ENCODE measurements at regions of chr9 and their contacts with region 1.

Region 1: DNA sequence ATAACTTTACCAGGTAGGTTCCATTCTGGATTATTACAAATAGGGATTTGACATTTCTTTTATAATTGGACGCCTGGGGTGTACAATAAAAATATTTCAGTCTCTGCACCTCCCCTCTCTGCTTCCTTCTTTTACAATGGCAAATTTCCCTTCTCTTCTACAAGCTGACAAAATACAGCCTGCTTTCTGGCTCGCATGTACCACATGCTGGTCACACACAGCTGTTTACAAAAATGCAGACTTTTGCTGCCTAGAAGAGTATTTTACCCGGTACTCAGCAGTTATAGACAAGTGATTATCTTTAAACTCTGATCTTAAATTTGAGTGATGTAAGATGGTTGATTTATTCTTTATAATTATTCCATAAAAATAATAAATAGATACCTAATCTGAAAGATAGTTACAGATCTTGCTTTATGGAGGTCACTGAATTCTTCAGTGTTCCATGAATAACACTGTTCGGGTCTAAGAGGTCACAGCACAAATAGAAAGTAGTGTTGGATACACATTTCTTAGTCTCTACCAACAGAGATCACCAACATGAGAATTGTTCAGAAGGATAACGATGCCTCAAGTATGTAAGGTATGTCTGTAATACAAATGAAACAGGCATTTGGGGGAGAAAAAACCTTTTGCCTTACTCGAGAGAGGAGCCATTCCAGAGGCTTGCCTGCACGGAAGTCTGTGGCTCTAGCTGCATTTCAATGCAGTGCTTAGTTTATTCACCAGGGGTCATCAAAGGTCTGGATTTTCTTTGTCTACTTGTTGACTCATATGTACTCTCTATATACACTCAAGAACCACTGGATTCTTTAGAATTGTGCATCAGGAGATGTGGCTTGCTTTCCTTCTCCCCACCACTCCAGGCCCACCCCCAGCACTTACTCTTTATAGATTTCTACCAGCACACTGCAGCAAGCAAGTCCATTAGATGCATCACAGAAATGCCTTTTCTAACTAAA is 206.6 kb upstream of the RFX3 start:
- DNase-seq: peak; percentile 47
- ATAC-seq: peak; percentile 92
- H3K4me3 Mint-ChIP-seq: no peak overlapping the region
- H3K27ac Mint-ChIP-seq: no peak overlapping the region
- H3K4me1 Mint-ChIP-seq: peaks cover 31% of the 10 kb centered on the region
- H3K27me3 Mint-ChIP-seq: peaks cover 2% of the 10 kb centered on the region

Region 2: DNA sequence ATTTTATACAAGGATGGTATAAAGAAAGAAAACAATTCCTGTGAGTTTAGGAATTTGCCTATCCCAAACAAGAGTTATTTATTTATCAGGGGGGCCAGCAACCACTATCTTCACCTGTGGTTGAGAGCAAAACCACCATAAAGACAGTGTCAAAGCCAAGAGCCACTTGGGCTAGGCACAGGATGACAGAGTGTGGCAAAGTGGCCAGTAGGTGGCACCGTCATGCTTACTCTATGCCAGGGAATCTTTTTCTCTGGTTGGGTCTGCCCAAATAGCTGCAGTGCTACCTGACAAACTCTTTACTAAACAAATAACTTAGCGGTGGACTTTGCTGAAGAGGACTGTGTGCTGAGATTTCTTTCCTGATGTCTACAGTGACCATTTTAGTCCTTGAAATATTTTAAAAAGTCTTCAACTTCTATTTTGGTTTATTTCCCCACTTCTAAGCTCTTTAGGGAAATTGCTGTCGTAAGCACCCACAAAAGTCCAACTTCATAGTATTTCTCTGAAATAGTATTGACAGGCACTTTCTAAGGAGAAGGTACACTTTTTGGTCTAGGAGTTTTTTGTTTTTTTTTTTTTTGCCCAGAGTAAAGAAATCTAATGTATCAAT is 491.6 kb before region 1 on chr9:
- CTCF ChIA-PET with region 1: interaction called, 5 read pairs
- POLR2A ChIA-PET with region 1: no interaction called
- intact Hi-C with region 1: loop called in 1 of 2 experiments (anchors 1 kb)
- DNase-seq: peak; percentile 84
- ATAC-seq: peak; percentile 93
- H3K4me3 Mint-ChIP-seq: no peak overlapping the region
- H3K27ac Mint-ChIP-seq: no peak overlapping the region
- H3K4me1 Mint-ChIP-seq: peaks cover 8% of the 10 kb centered on the region
- H3K27me3 Mint-ChIP-seq: no peaks in the 10 kb centered on the region

Region 3: GRCh38 chr9:3931996-3932906 is 199.9 kb after region 1 on chr9:
- CTCF ChIA-PET with region 1: interaction called, 3 read pairs
- POLR2A ChIA-PET with region 1: no interaction called
- intact Hi-C with region 1: loop called in 1 of 2 experiments (anchors 10 kb)
- DNase-seq: no peak
- ATAC-seq: peak; percentile 72
- H3K4me3 Mint-ChIP-seq: no peak overlapping the region
- H3K27ac Mint-ChIP-seq: no peak overlapping the region
- H3K4me1 Mint-ChIP-seq: peaks cover 24% of the 10 kb centered on the region
- H3K27me3 Mint-ChIP-seq: peaks cover 6% of the 10 kb centered on the region

Region 4: GRCh38 chr9:4197548-4197947 is 465.2 kb after region 1 on chr9:
- CTCF ChIA-PET with region 1: interaction called, 4 read pairs
- POLR2A ChIA-PET with region 1: no interaction called
- intact Hi-C with region 1: loop called (anchors 1 to 5 kb)
- DNase-seq: peak; percentile 36
- ATAC-seq: peak; percentile 51
- H3K4me3 Mint-ChIP-seq: no peak overlapping the region
- H3K27ac Mint-ChIP-seq: no peak overlapping the region
- H3K4me1 Mint-ChIP-seq: no peaks in the 10 kb centered on the region
- H3K27me3 Mint-ChIP-seq: peaks cover 6% of the 10 kb centered on the region

Region 5: GRCh38 chr9:4297151-4297785 is 564.9 kb after region 1 on chr9:
- CTCF ChIA-PET with region 1: no interaction called
- POLR2A ChIA-PET with region 1: no interaction called
- intact Hi-C with region 1: loop called in 1 of 2 experiments (anchors 5 kb)
- DNase-seq: peak; percentile 65
- ATAC-seq: peak; percentile 37
- H3K4me3 Mint-ChIP-seq: peak overlapping the region; percentile 86
- H3K27ac Mint-ChIP-seq: peak overlapping the region; percentile 86
- H3K4me1 Mint-ChIP-seq: peaks cover 45% of the 10 kb centered on the region
- H3K27me3 Mint-ChIP-seq: peaks cover 32% of the 10 kb centered on the region

Region 6: GRCh38 chr9:4366591-4367330 is 634.4 kb after region 1 on chr9:
- CTCF ChIA-PET with region 1: interaction called, 3 read pairs
- POLR2A ChIA-PET with region 1: no interaction called
- intact Hi-C with region 1: loop called (anchors 2 to 10 kb)
- DNase-seq: peak; percentile 53
- ATAC-seq: no peak
- H3K4me3 Mint-ChIP-seq: no peak overlapping the region
- H3K27ac Mint-ChIP-seq: no peak overlapping the region
- H3K4me1 Mint-ChIP-seq: peaks cover 12% of the 10 kb centered on the region
- H3K27me3 Mint-ChIP-seq: peaks cover 5% of the 10 kb centered on the region

Region 7: DNA sequence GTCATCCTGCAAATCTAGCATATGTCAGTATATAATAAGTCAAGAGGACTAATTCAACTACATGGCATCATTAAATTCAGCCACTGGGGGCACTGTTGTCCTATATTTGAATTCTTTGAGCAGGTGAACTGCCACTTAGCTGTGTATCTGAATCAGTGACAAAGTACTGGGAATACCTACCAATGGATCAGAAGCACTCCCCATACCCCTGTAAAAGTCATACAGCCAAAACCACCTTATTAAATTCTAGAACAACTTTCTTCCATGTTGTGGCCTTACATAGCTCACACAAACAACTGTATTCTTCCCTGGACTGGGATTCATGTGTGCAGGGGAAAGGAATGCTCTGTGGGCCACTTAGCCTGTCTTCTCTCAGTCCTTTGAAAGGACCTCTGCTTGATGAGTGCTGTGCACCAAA is 872.3 kb after region 1 on chr9:
- CTCF ChIA-PET with region 1: no interaction called
- POLR2A ChIA-PET with region 1: no interaction called
- intact Hi-C with region 1: no loop called
- DNase-seq: peak; percentile 82
- ATAC-seq: peak; percentile 84
- H3K4me3 Mint-ChIP-seq: no peak overlapping the region
- H3K27ac Mint-ChIP-seq: no peak overlapping the region
- H3K4me1 Mint-ChIP-seq: peaks cover 34% of the 10 kb centered on the region
- H3K27me3 Mint-ChIP-seq: no peaks in the 10 kb centered on the region